ENCODE measurements at regions of chr7 and their contacts with region 1.

Region 1: GRCh38 chr7:135170274-135170997 is at the start of gene CYREN:
- DNase-seq: peak; percentile 97
- H3K4me3 Mint-ChIP-seq: peak within 1 kb of the TSS; percentile 89
- H3K27ac Mint-ChIP-seq: peak within 1 kb of the TSS; percentile 95
- H3K4me1 Mint-ChIP-seq: peaks cover 43% of the 10 kb centered on the region
- H3K27me3 Mint-ChIP-seq: no peaks in the 10 kb centered on the region
- total RNA-seq, gene CYREN: 36.7 to 39.0 TPM

Region 2: GRCh38 chr7:133804127-133804526 is 1366.3 kb before region 1 on chr7:
- CTCF ChIA-PET with region 1: no interaction called
- intact Hi-C with region 1: no loop called
- DNase-seq: no peak
- H3K4me3 Mint-ChIP-seq: no peak overlapping the region
- H3K27ac Mint-ChIP-seq: no peak overlapping the region
- H3K4me1 Mint-ChIP-seq: no peaks in the 10 kb centered on the region
- H3K27me3 Mint-ChIP-seq: no peaks in the 10 kb centered on the region

Region 3: DNA sequence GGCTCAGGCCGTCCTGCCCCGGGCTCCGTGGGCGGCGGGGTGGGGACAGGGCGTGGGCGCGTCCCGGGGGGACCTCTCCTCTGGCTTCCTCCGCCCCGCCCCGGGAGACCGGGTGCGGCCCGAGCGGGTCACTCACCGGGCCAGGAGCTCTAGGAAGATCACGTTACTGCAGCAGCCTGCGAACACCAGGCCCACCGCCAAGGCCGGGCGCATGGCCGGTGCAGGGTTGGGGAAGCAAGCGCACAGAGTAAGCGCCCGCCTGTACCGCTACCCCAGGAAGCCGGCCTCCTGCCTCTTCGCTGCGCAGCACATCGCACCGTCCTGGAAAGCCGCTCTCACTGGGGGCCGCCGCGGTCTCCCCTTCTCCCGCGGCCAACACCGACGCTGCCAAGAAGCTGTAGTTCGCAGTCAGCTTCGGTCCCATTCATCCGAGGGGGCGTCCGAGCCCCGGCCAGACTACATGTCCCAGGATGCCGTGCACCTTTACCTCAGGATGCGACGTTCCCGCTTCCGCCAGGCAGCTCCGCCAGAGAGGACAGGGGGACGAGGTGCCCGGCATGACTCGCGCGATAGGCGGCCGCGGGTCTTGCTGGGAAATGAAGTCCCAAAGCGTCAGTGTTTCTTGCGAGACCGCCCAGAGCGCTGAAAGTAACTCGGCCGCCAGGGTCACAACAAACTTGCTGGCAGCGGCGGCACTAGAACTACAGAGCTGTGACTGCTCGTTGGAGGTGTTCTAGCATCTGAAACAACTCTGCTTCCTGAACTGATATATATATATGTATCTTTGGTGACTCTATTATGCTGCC is 853.7 kb before region 1 on chr7 and contains the start of gene SLC35B4:
- CTCF ChIA-PET with region 1: no interaction called
- intact Hi-C with region 1: loop called (anchors 5 kb)
- DNase-seq: peak; percentile 97
- H3K4me3 Mint-ChIP-seq: peak within 1 kb of the TSS; percentile 92
- H3K27ac Mint-ChIP-seq: peak within 1 kb of the TSS; percentile 77
- H3K4me1 Mint-ChIP-seq: peaks cover 16% of the 10 kb centered on the region
- H3K27me3 Mint-ChIP-seq: no peaks in the 10 kb centered on the region
- total RNA-seq, gene SLC35B4: 7.9 to 10.3 TPM

Region 4: GRCh38 chr7:134646425-134647305 is 523.8 kb before region 1 on chr7 and contains the start of gene BPGM:
- CTCF ChIA-PET with region 1: interaction called, 3 read pairs
- intact Hi-C with region 1: loop called (anchors 1 kb)
- DNase-seq: peak; percentile 99
- H3K4me3 Mint-ChIP-seq: no peak within 1 kb of the TSS
- H3K27ac Mint-ChIP-seq: no peak within 1 kb of the TSS
- H3K4me1 Mint-ChIP-seq: peaks cover 37% of the 10 kb centered on the region
- H3K27me3 Mint-ChIP-seq: no peaks in the 10 kb centered on the region
- total RNA-seq, gene BPGM: 13.9 to 14.2 TPM

Region 5: GRCh38 chr7:134750083-134751062 is 420.1 kb before region 1 on chr7:
- CTCF ChIA-PET with region 1: interaction called, 3 read pairs
- intact Hi-C with region 1: loop called (anchors 5 kb)
- DNase-seq: peak; percentile 86
- H3K4me3 Mint-ChIP-seq: no peak overlapping the region
- H3K27ac Mint-ChIP-seq: no peak overlapping the region
- H3K4me1 Mint-ChIP-seq: peaks cover 3% of the 10 kb centered on the region
- H3K27me3 Mint-ChIP-seq: no peaks in the 10 kb centered on the region

Region 6: DNA sequence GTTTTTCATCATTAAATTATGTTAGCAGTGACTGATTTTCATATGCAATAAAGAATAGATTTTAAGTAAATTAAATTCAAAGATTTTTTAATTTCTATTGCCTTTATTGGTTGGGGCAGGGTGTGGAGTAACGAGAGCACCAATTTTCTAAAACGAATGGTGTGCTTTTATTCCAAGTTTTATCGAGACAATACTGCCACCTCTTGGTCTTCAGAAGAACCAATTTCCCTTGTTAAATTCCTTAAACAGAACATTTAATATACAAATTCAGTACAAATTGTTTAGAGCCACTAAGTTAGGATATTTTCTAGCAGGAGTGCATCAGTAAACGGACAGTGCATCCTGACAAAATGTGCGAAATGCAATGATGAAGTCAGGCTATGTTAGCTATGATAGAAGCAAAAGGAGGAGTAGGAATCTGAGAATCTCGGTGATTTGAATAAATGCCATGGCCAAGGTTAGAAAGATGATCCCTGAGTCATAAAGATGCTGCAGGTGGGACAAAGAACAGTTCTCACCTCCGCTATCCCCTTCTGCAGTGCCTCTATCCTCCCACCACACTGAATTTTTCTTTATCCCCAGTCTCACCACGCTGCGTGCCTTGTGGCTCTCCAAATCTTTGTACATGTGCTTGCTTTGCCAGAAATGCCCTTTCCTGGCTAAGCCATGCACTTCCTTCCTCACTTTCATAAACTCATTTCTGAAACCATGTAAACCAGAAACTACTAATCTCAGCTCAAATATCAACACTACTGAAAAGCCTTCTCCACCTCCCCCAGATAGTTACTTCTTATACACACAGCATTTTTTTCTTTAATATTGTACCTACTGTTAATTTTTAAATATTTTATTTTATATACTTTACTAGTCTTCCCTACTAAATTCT is 216.0 kb before region 1 on chr7:
- CTCF ChIA-PET with region 1: interaction called, 5 read pairs
- intact Hi-C with region 1: loop called (anchors 1 kb)
- DNase-seq: no peak
- H3K4me3 Mint-ChIP-seq: no peak overlapping the region
- H3K27ac Mint-ChIP-seq: no peak overlapping the region
- H3K4me1 Mint-ChIP-seq: no peaks in the 10 kb centered on the region
- H3K27me3 Mint-ChIP-seq: no peaks in the 10 kb centered on the region

Region 7: GRCh38 chr7:135147899-135148721 is 22.3 kb before region 1 on chr7 and contains the start of gene TMEM140:
- CTCF ChIA-PET with region 1: interaction called, 61 read pairs
- intact Hi-C with region 1: loop called (anchors 1 kb)
- DNase-seq: peak; percentile 72
- H3K4me3 Mint-ChIP-seq: peak within 1 kb of the TSS; percentile 81
- H3K27ac Mint-ChIP-seq: peak within 1 kb of the TSS; percentile 91
- H3K4me1 Mint-ChIP-seq: peaks cover 49% of the 10 kb centered on the region
- H3K27me3 Mint-ChIP-seq: no peaks in the 10 kb centered on the region
- total RNA-seq, gene TMEM140: 8.1 to 9.2 TPM

Region 8: DNA sequence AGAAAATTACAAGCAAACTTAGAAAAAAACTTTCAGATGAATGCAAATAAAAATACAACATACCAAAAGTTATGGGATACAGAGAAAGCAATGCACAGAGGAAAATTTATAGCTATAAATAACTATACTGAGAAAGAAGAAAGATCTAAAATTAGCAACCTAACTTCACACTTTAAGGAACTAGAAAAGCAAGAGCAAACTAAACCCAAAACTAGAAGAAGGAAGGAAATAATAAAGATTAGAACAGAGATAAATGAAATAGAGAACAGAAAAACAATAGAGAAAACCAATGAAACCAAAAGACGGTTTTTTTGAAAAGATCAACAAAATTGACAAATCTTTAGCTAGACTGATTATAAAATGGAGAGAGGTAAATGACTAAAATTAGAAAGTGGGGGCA is 53.6 kb after region 1 on chr7:
- CTCF ChIA-PET with region 1: no interaction called
- intact Hi-C with region 1: no loop called
- DNase-seq: no peak
- H3K4me3 Mint-ChIP-seq: no peak overlapping the region
- H3K27ac Mint-ChIP-seq: no peak overlapping the region
- H3K4me1 Mint-ChIP-seq: peaks cover 12% of the 10 kb centered on the region
- H3K27me3 Mint-ChIP-seq: no peaks in the 10 kb centered on the region

Measured in activated naive CD4-positive, alpha-beta T cell treated with anti-CD3 and anti-CD28 coated beads for 36 hours (primary cell).